ENCODE measurements at regions of chr15 and their contacts with region 1.

Region 1: DNA sequence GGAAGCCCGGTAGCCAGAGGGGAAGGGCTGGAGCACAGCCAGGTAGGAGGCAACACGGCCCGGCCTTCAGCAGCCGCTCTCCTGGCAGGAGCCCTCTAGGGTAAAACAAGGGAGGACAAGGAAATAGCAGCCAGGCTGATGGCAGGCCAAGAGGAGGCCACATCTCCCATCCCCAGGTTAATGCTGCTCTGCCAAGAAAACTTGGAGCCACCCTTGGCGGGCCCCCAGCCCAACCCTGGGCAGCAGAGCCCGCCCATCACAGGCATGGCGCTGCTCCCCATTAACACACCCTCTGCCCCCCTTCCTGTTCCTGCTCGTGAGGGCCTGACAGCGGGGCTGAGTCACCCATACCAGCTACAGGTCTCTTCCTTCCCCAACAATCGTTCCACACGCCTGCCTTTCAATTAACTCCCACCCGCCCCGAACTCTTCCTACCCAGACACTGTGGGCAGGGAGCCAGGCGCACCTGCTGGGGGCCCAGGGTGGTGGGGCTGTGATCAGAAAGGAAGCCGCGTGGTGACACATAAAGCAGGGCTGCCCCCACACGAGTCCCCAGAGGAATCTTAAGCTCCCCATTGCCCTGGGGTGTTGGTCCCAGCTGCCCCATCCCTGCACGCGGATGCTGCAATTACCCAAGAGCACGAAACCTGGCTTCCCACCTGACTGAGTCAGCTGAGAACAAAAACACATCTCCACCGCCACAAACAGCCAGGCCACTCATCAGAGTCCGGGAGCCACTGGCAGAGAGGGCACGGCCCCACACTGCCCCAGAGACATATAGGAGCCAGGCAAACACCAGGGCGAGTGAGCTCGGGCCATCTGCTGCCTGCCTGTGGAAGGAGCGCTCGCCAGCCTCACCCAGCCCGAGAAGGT is at the start of gene C15orf62:
- DNase-seq: peak; percentile 93 to 94
- H3K4me3 ChIP-seq: peak within 1 kb of the TSS; percentile 41; the same call in 1 of the 2 replicates
- H3K27ac ChIP-seq: peak within 1 kb of the TSS; percentile 83
- H3K4me1 ChIP-seq: peaks cover 58% of the 10 kb centered on the region
- H3K27me3 ChIP-seq: no peaks in the 10 kb centered on the region
- CTCF ChIP-seq: no peak
- total RNA-seq, gene C15orf62: 0.23 and 0.33 TPM in 2 replicates

Region 2: DNA sequence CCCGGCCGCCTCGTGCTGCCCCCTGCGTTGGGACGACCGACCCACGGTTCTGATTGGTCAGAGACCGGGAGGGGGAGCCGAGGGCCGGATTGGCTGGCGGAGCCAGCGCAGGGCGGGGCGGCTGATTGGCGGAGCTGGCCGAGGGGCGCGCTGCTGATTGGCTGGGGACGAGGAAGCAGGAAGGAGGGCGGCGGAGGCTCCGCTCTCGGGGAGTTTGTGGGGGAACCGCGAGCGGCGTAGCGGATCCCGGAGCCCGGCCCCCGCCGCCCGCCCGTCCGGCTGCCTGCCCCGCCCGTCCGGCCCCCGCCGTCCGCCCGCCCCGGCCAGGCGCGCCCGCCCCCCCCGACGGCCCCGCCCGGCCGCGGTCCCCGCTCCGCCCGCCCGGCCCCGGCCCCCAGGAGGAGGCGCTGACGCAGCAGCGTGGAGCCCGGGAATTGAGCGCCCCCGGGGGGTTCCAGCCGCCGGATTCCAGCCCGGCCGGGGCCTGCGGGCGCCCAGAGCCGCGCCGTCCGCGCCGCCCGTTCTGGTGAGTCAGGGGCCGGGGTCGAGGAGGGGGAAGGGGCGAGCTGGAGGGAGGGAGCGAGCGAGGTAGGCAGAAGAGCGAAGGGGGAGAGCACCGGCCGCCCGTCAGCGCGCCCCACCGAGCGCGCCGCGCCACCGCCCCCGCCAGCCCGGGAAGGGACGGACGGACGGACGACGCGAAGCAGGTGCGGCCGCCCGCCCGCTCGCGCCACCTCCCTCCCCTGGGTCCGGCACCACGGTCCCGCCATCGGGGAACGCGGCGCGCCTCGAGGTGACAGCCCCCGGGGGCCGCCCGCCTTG is 328.6 kb before region 1 on chr15 and contains the start of gene BAHD1:
- CTCF ChIA-PET with region 1: no interaction called
- POLR2A ChIA-PET with region 1: no interaction called
- intact Hi-C with region 1: no loop called
- DNase-seq: peak; percentile 77 to 96
- H3K4me3 ChIP-seq: peak within 1 kb of the TSS; percentile 66
- H3K27ac ChIP-seq: peak within 1 kb of the TSS; percentile 45
- H3K4me1 ChIP-seq: peaks cover 9% of the 10 kb centered on the region; the same call in 1 of the 2 replicates
- H3K27me3 ChIP-seq: no peaks in the 10 kb centered on the region
- CTCF ChIP-seq: no peak
- total RNA-seq, gene BAHD1: 17.3 and 19.1 TPM in 2 replicates

Region 3: GRCh38 chr15:40593588-40594428 is 175.7 kb before region 1 on chr15 and contains the start of gene KNL1:
- CTCF ChIA-PET with region 1: no interaction called
- POLR2A ChIA-PET with region 1: no interaction called
- intact Hi-C with region 1: loop called (anchors 10 kb)
- DNase-seq: peak; percentile 79 to 94
- H3K4me3 ChIP-seq: peak within 1 kb of the TSS; percentile 93
- H3K27ac ChIP-seq: peak within 1 kb of the TSS; percentile 88
- H3K4me1 ChIP-seq: peaks cover 8% of the 10 kb centered on the region; the same call in 1 of the 2 replicates
- H3K27me3 ChIP-seq: no peaks in the 10 kb centered on the region
- CTCF ChIP-seq: no peak
- total RNA-seq, gene KNL1: 16.2 and 27.5 TPM in 2 replicates

Region 4: DNA sequence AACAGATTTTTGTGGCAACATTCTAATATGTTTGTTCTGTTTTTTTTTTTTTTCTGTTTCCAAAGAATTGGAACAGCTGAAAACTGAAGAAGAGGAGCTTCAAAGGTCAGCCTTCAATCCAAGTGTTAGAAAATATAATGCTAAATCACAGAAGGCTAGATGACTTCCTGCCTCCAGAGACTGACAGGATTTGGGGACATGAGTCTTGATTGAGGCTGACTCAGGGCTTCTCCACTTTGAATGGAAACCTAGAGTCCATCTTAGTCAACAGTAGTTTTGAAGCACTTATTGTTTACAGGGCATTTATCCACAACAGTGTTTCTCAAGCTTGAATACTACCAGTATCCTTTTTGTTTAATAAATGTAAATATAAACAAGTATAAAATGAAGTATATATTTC is 119.0 kb before region 1 on chr15:
- CTCF ChIA-PET with region 1: interaction called, 20 read pairs
- POLR2A ChIA-PET with region 1: interaction called, 11 read pairs
- intact Hi-C with region 1: no loop called
- DNase-seq: no peak
- H3K4me3 ChIP-seq: no peak overlapping the region
- H3K27ac ChIP-seq: no peak overlapping the region
- H3K4me1 ChIP-seq: no peaks in the 10 kb centered on the region
- H3K27me3 ChIP-seq: no peaks in the 10 kb centered on the region
- CTCF ChIP-seq: no peak

Region 5: GRCh38 chr15:40702077-40702476 is 67.4 kb before region 1 on chr15:
- CTCF ChIA-PET with region 1: no interaction called
- POLR2A ChIA-PET with region 1: no interaction called
- intact Hi-C with region 1: no loop called
- DNase-seq: no peak
- H3K4me3 ChIP-seq: no peak overlapping the region
- H3K27ac ChIP-seq: no peak overlapping the region
- H3K4me1 ChIP-seq: no peaks in the 10 kb centered on the region
- H3K27me3 ChIP-seq: no peaks in the 10 kb centered on the region
- CTCF ChIP-seq: peak; percentile 34; the same call in 1 of the 2 replicates

Region 6: DNA sequence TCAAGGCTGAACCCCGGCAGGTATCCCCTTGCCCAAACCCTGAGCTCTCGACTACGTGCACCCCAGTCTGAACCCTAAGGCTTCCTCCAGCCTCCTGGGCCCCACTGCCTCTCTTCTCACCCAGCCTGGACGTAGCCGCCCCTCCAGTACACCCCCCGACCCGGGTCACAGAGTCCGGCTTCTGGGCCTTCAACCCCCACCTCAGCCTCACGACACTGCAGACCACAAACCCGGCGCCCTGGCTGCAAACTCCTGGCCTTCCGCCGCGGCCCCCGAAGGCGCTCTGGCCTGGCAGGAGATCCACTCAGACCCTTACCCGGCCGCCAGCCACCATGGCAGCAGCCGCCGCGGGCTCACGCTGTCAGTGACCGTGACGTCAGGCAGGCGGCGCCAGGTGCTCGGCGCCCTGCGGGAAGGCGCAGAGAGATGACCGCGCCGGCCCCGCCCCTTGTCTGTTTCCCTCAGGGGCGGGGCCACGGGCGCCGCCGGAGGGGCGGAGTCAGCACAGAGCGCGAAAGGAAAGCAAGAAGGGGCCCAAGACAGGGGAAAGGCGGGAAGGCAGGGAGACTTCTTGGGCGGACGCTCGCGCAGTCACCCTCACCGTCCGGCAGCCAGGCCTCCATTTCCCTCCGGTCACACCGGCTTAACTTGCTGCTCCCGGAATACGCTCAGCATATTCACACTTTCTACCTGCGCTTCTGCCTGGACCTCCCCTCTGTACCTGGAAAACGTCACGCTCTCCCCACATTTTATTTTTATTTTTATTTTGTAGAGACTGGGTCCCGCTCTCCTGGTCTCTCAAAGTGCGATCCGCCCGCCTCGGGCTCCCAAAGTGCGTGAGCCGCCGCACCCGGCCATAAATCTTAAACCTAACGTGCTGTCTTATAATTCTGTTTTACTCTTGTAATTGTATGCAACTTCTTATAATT is 14.4 kb before region 1 on chr15 and contains the start of gene RMDN3:
- CTCF ChIA-PET with region 1: no interaction called
- POLR2A ChIA-PET with region 1: no interaction called
- intact Hi-C with region 1: loop called (anchors 1 kb)
- DNase-seq: peak; percentile 73 to 92
- H3K4me3 ChIP-seq: peak within 1 kb of the TSS; percentile 93
- H3K27ac ChIP-seq: peak within 1 kb of the TSS; percentile 59
- H3K4me1 ChIP-seq: peaks cover 12% of the 10 kb centered on the region; the same call in 1 of the 2 replicates
- H3K27me3 ChIP-seq: no peaks in the 10 kb centered on the region
- CTCF ChIP-seq: no peak
- total RNA-seq, gene RMDN3: 15.7 and 19.8 TPM in 2 replicates

Region 7: GRCh38 chr15:40807028-40807887 is 37.7 kb after region 1 on chr15 and contains the starts of genes DNAJC17 and ZFYVE19:
- CTCF ChIA-PET with region 1: no interaction called
- POLR2A ChIA-PET with region 1: interaction called, 5 read pairs
- intact Hi-C with region 1: loop called (anchors 1 kb)
- DNase-seq: peak; percentile 91 to 93
- H3K4me3 ChIP-seq: peak within 1 kb of the TSS; percentile 99
- H3K27ac ChIP-seq: peak within 1 kb of the TSS; percentile 72
- H3K4me1 ChIP-seq: peaks cover 9% of the 10 kb centered on the region; the same call in 1 of the 2 replicates
- H3K27me3 ChIP-seq: no peaks in the 10 kb centered on the region
- CTCF ChIP-seq: no peak
- total RNA-seq, gene DNAJC17: 27.4 and 33.0 TPM in 2 replicates
- total RNA-seq, gene ZFYVE19: 32.6 and 33.1 TPM in 2 replicates

Region 8: DNA sequence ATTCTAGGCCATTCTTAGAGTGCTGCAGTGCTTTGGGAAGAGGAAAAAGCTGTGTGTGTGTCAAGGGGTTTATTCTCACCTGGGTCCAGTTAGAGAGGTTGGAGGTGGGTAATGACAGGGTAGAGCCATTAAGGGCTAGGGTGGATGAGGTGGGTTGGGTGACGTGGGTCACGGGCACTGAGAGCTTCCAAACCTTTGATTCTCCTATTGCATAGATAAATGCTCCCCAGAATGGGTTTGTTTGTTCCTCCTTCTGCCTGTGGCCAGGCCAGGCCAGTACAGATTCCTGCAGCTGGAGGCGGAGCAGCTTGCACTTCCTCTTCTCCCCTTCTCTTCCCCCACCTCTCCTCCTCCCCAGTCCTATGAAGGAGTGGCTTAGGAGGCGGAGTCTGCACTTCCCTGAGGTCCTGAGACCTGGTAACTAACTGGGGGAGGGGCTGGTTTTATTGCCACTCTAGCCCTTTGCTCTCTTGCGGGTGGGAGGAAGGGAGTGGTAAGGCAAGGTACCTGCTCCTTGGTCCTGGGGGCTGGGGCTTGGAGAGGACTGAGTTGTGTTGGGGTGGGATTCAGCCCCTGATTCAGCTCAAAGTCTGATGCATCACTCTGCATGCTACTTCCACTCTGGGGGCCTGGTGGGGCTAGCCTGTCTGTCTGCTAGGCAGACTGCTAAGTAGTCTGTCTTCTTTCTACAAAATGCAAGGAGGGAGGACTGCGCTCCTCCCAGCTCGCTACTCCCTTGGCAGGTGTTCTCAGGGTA is 77.9 kb after region 1 on chr15:
- CTCF ChIA-PET with region 1: no interaction called
- POLR2A ChIA-PET with region 1: no interaction called
- intact Hi-C with region 1: loop called (anchors 1 kb)
- DNase-seq: peak; percentile 72 to 77
- H3K4me3 ChIP-seq: peak overlapping the region; percentile 71; the same call in 1 of the 2 replicates
- H3K27ac ChIP-seq: peak overlapping the region; percentile 93
- H3K4me1 ChIP-seq: peaks cover 31% of the 10 kb centered on the region
- H3K27me3 ChIP-seq: no peaks in the 10 kb centered on the region
- CTCF ChIP-seq: no peak

Measured in PC-9 (cell line).